ENCODE measurements at regions of chr11 and their contacts with region 1.

Region 1: DNA sequence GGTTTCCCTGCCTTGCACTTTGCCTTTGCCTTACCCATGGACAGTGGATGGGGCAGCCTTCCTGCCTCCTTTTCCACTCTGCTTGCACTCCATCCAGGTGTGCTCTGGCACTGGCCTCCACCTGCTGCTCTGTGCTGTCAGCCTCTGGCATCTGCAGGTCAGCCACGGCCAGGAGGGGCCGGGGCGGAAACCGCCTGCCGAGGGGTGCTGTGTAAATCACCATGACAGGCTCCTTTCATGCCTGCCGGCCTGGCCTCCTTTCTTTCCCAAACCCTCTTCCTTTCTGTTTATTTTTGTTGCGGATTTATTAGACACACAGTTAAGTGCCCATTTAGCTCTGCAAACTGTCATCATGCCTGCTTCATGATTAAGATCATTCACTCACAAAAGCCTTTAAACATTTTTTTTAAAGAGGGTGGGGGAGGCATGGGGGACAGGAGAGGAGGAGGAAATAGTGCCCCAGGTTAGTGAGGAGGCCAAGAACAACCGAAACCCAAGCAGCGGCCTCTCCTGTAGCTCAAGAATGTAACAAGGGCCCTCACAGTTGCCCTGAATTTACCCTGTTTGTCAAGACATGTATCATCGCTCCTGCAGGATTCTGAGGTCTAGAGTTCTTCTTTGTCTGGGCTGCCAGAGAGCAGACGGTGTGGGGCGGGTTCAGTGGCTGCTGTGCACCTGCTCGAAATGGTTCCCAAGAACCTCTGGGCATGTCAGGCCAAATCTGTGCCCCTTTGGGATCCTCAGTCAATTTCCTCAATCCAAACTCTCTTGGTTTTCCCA is 83.3 kb downstream of the BARX2 start:
- DNase-seq: peak; percentile 78 to 83
- H3K4me3 ChIP-seq: no peak overlapping the region
- H3K4me3 Mint-ChIP-seq: no peak overlapping the region
- H3K27ac Mint-ChIP-seq: peak overlapping the region; percentile 76
- H3K4me1 ChIP-seq: peaks cover 64% of the 10 kb centered on the region
- H3K4me1 Mint-ChIP-seq: peaks cover 62% of the 10 kb centered on the region
- H3K27me3 ChIP-seq: no peaks in the 10 kb centered on the region
- H3K27me3 Mint-ChIP-seq: no peaks in the 10 kb centered on the region
- CTCF ChIP-seq: no peak

Region 2: GRCh38 chr11:129427376-129427775 is 31.6 kb before region 1 on chr11:
- CTCF ChIA-PET with region 1: interaction called, 5 read pairs
- POLR2A ChIA-PET with region 1: no interaction called
- intact Hi-C with region 1: loop called (anchors 1 kb)
- DNase-seq: peak; percentile 79 to 81
- H3K4me3 ChIP-seq: no peak overlapping the region
- H3K4me3 Mint-ChIP-seq: peak overlapping the region; percentile 32
- H3K27ac Mint-ChIP-seq: peak overlapping the region; percentile 54
- H3K4me1 ChIP-seq: peaks cover 63% of the 10 kb centered on the region
- H3K4me1 Mint-ChIP-seq: peaks cover 50% of the 10 kb centered on the region
- H3K27me3 ChIP-seq: no peaks in the 10 kb centered on the region
- H3K27me3 Mint-ChIP-seq: no peaks in the 10 kb centered on the region
- CTCF ChIP-seq: no peak

Region 3: DNA sequence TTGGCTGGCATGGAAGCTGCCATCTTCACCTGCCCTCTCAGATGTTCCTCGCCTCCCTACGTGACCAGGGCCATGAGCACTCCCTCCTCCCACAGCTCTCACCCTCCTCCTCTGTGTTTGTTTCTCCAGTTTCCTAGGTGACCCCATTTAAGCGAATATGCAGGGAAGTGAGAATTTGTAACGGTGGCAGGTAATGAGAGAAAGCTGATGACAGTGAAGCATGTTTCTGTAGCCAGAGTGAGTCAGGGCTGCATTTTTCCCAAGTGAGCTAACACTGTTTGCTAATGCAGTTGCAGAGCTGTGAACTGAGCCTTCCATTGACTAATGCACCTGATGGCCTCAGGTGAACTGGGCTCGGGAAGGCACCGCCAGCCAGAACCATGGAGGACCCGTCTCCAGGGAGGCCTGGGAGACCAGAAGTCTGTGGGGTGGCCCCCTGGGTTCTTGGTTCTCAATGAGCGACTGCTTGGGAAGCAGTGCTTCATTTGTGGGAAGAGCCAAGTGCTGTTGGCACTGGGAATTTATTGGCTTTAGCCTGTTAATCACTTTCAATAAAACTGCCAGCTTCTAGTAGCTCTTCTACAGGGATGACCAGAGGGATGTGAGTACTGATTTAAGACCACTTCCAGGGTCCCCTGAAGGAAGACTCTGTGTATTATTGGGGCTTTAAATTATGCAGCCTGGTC is 18.8 kb before region 1 on chr11:
- CTCF ChIA-PET with region 1: no interaction called
- POLR2A ChIA-PET with region 1: no interaction called
- intact Hi-C with region 1: loop called (anchors 2 kb)
- DNase-seq: peak; percentile 65 to 66
- H3K4me3 ChIP-seq: no peak overlapping the region
- H3K4me3 Mint-ChIP-seq: no peak overlapping the region
- H3K27ac Mint-ChIP-seq: peak overlapping the region; percentile 13
- H3K4me1 ChIP-seq: peaks cover 19% of the 10 kb centered on the region
- H3K4me1 Mint-ChIP-seq: peaks cover 29% of the 10 kb centered on the region
- H3K27me3 ChIP-seq: no peaks in the 10 kb centered on the region
- H3K27me3 Mint-ChIP-seq: no peaks in the 10 kb centered on the region
- CTCF ChIP-seq: no peak

Region 4: GRCh38 chr11:129504956-129505665 is 46.2 kb after region 1 on chr11:
- CTCF ChIA-PET with region 1: no interaction called
- POLR2A ChIA-PET with region 1: no interaction called
- intact Hi-C with region 1: loop called (anchors 2 kb)
- DNase-seq: no peak
- H3K4me3 ChIP-seq: no peak overlapping the region
- H3K4me3 Mint-ChIP-seq: no peak overlapping the region
- H3K27ac Mint-ChIP-seq: no peak overlapping the region
- H3K4me1 ChIP-seq: peaks cover 29% of the 10 kb centered on the region
- H3K4me1 Mint-ChIP-seq: peaks cover 31% of the 10 kb centered on the region
- H3K27me3 ChIP-seq: no peaks in the 10 kb centered on the region
- H3K27me3 Mint-ChIP-seq: no peaks in the 10 kb centered on the region
- CTCF ChIP-seq: no peak

Region 5: DNA sequence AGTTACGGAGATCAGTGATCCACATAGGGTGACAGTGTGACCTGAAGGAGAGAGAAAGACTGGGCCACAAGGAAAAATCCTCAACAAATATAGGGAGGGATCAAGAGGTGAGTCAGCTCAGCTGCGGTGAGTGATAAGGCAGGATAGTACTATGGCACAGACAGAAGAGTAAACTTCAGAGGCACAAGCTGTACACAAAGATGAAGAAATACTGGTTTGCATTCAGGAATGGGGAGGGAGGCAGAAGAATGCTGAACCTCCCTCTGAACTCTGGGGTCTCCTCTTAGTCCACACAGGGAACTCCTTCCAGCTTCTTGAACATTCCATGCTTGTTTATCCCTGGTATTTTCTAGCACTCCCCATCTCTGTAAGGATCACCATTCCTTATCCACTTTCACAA is 79.4 kb after region 1 on chr11:
- CTCF ChIA-PET with region 1: no interaction called
- POLR2A ChIA-PET with region 1: no interaction called
- intact Hi-C with region 1: loop called (anchors 1 kb)
- DNase-seq: peak; percentile 63 to 68
- H3K4me3 ChIP-seq: no peak overlapping the region
- H3K4me3 Mint-ChIP-seq: no peak overlapping the region
- H3K27ac Mint-ChIP-seq: peak overlapping the region; percentile 6
- H3K4me1 ChIP-seq: peaks cover 16% of the 10 kb centered on the region
- H3K4me1 Mint-ChIP-seq: peaks cover 12% of the 10 kb centered on the region
- H3K27me3 ChIP-seq: no peaks in the 10 kb centered on the region
- H3K27me3 Mint-ChIP-seq: no peaks in the 10 kb centered on the region
- CTCF ChIP-seq: no peak

Region 6: DNA sequence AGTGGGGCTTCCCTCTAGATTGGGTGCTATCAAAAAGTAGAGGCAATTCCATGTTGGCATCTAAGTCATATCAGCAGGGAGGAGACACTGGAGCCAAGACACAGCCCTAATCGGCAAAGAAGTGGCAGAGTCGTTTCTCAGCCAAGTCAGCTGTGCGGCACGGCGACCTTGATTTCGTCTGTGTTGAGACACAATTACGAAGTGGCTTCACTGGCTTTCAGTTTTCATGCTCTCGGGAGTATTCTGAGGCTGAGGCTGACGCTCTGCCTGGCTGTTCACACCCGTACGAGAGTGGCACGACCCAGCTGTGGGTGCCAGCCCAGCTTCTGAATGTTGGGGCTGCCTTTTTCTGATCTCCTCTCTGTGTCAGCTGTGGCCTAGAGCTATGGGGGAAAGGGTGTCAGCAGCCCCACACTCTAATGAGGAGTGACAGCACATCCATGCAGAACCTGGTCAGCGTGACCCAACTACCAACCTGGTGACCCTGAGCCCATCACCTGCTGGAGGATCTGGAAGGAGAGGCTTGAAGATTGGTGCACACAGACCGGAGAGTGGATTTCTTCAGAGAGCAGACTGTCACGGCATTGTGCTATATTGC is 251.0 kb after region 1 on chr11:
- CTCF ChIA-PET with region 1: no interaction called
- POLR2A ChIA-PET with region 1: no interaction called
- intact Hi-C with region 1: no loop called
- DNase-seq: peak in 1 of 2 experiments; percentile 31
- H3K4me3 ChIP-seq: no peak overlapping the region
- H3K4me3 Mint-ChIP-seq: no peak overlapping the region
- H3K27ac Mint-ChIP-seq: no peak overlapping the region
- H3K4me1 ChIP-seq: peaks cover 4% of the 10 kb centered on the region
- H3K4me1 Mint-ChIP-seq: peaks cover 1% of the 10 kb centered on the region
- H3K27me3 ChIP-seq: no peaks in the 10 kb centered on the region
- H3K27me3 Mint-ChIP-seq: no peaks in the 10 kb centered on the region
- CTCF ChIP-seq: no peak

Measured in Caco-2 (cell line).